ENCODE measurements at regions of chr22 and their contacts with region 1.

Region 1: GRCh38 chr22:36470162-36470993 is 11.1 kb downstream of the TXN2 start:
- DNase-seq: peak; percentile 82
- H3K4me3 ChIP-seq: no peak overlapping the region
- H3K27ac ChIP-seq: peak overlapping the region; percentile 74
- H3K4me1 ChIP-seq: peaks cover 63% of the 10 kb centered on the region
- H3K27me3 ChIP-seq: no peaks in the 10 kb centered on the region
- CTCF ChIP-seq: peak; percentile 93 to 99

Region 2: GRCh38 chr22:36143463-36143860 is 326.9 kb before region 1 on chr22:
- CTCF ChIA-PET with region 1: no interaction called
- dilution Hi-C with region 1: no loop called
- in situ Hi-C with region 1: no loop called
- intact Hi-C with region 1: no loop called
- DNase-seq: no peak
- H3K4me3 ChIP-seq: no peak overlapping the region
- H3K27ac ChIP-seq: no peak overlapping the region
- H3K4me1 ChIP-seq: no peaks in the 10 kb centered on the region
- H3K27me3 ChIP-seq: no peaks in the 10 kb centered on the region
- CTCF ChIP-seq: no peak

Region 3: DNA sequence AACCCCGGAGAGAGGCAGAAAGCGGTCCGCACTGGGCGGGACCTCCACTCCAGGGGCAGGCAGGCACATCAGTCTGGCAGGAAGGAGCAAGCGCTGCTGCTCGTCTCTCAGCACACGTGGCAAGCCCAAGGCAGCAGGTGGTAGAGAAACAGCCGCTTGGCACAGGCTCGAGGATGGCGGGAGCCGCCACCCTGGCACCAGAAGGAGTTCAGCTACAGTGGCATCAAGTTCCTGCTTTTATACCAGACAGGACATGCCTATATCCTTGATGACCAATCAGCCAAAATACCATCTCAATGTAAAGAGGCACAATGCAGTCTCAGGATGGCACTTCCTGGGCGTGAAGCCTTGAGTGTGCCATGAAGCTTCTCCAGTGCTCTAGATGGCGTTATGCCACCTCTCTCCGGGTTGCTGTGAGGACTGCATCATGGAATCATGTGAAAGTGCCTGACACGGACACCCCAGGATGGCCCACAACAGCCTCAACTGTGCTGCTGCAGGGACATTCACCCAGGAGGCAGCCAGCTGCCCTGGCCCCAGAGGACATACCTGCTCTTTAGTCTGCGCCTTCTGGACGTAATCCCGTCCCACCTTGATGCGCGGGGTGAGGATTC is 152.6 kb before region 1 on chr22:
- CTCF ChIA-PET with region 1: no interaction called
- dilution Hi-C with region 1: no loop called
- in situ Hi-C with region 1: no loop called
- intact Hi-C with region 1: loop called (anchors 1 kb)
- DNase-seq: peak; percentile 46
- H3K4me3 ChIP-seq: no peak overlapping the region
- H3K27ac ChIP-seq: peak overlapping the region; percentile 15
- H3K4me1 ChIP-seq: peaks cover 12% of the 10 kb centered on the region
- H3K27me3 ChIP-seq: no peaks in the 10 kb centered on the region
- CTCF ChIP-seq: no peak

Region 4: DNA sequence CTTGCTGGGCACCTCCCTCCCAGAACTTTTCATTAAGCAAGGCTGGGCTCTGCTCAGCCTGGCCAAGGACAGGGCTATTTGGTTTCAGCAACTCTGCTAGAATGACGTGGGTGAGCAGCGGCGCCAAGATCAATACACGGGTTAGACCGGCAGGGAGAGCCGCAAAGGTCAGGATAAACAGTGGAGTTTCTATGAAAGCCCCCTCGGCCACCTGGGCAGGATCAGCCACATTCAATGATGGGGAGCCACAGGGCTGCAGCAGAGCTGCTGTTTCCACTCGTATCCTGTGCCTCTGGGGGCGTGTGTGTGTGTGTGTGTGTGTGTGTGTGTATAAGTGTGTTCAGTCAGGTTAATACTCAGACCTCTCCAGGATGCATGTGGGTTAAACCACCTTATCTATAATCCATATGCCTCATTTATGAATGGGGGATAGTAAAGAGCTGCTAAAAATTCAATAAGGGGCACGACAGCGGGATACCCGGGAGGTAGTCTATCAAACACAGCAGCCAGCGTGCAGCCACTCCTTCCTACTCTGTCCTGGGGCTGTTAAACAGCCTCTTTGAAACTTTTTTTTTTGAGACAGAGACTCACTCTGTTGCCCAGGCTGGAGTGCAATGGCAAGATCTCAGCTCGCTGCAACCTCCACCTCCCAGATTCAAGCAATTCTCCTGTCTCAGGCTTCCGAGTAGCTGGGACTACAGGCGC is 117.4 kb before region 1 on chr22:
- CTCF ChIA-PET with region 1: interaction called, 3 read pairs
- dilution Hi-C with region 1: no loop called
- in situ Hi-C with region 1: no loop called
- intact Hi-C with region 1: loop called (anchors 1 kb)
- DNase-seq: peak; percentile 71
- H3K4me3 ChIP-seq: no peak overlapping the region
- H3K27ac ChIP-seq: peak overlapping the region; percentile 75
- H3K4me1 ChIP-seq: peaks cover 79% of the 10 kb centered on the region
- H3K27me3 ChIP-seq: no peaks in the 10 kb centered on the region
- CTCF ChIP-seq: no peak

Region 5: GRCh38 chr22:36369922-36370791 is 100.2 kb before region 1 on chr22:
- CTCF ChIA-PET with region 1: no interaction called
- dilution Hi-C with region 1: loop called (anchors 5 kb)
- in situ Hi-C with region 1: no loop called
- intact Hi-C with region 1: loop called (anchors 1 kb)
- DNase-seq: peak; percentile 74
- H3K4me3 ChIP-seq: no peak overlapping the region
- H3K27ac ChIP-seq: peak overlapping the region; percentile 74
- H3K4me1 ChIP-seq: peaks cover 97% of the 10 kb centered on the region
- H3K27me3 ChIP-seq: no peaks in the 10 kb centered on the region
- CTCF ChIP-seq: no peak

Region 6: DNA sequence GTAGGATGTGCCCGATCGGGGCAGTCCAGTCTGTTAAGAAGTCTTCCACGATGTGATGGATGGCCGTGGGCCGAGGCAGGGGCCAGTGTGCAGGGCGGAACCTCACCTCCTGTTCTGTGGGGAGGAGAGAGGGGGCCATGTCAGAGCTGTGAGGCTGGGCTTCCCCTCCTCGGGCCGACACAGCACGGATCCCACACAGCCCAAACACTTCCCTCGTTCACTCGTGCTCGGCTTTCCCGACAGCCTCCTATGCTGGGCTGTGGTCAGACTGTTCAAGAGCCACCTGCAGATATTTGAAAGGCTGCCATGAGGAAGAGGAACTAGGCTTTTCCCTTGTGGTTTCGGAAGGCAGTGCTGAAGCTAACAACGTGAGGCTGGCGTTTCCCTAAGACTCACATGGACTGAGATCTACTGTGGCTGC is 23.3 kb after region 1 on chr22:
- CTCF ChIA-PET with region 1: interaction called, 10 read pairs
- dilution Hi-C with region 1: no loop called
- in situ Hi-C with region 1: no loop called
- intact Hi-C with region 1: no loop called
- DNase-seq: no peak
- H3K4me3 ChIP-seq: no peak overlapping the region
- H3K27ac ChIP-seq: no peak overlapping the region
- H3K4me1 ChIP-seq: no peaks in the 10 kb centered on the region
- H3K27me3 ChIP-seq: no peaks in the 10 kb centered on the region
- CTCF ChIP-seq: no peak

Measured in mammary epithelial cell (primary cell).